ENCODE measurements at regions of chr17 and their contacts with region 1.

Region 1: GRCh38 chr17:75749545-75750389 is 15.2 kb downstream of the GALK1 start:
- DNase-seq: no peak
- H3K4me3 ChIP-seq: no peak overlapping the region
- H3K27me3 ChIP-seq: no peaks in the 10 kb centered on the region
- CTCF ChIP-seq: peak; percentile 92

Region 2: DNA sequence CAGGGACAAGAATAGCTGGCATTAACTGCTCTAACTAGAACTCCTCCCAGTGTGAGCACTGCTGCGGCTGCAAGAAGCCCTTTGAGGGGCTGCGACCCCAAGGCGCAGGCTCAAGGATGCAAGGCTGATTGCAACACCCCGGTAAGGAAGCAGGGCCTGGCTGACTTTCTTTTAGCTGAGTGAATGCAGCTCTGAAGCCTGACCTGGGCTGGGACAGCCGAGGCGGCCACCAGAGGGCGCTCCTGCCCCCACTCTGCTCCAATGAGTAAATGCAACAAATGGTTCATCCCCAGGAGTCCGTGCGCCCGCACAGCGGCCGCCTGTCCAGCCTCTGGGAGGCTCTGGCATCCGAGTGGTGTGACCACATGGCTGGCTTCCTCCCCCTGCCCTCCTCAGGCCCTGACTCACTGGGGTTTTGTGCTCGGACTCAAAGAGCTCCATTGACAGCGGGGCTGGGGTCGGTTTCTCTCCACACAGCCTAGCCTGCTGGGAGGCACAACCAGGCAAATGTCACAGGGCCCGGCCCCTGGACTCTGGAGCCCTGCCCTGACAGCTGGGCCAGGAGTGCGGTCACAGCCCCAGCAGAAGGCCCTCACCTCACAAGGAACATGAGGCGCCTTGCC is 116.8 kb before region 1 on chr17 and contains the start of gene SMIM5:
- CTCF ChIA-PET with region 1: interaction called, 502 read pairs
- POLR2A ChIA-PET with region 1: no interaction called
- DNase-seq: peak; percentile 45
- H3K4me3 ChIP-seq: no peak within 1 kb of the TSS
- H3K27me3 ChIP-seq: no peaks in the 10 kb centered on the region
- CTCF ChIP-seq: peak; percentile 96
- polyA plus RNA-seq, gene SMIM5: 0.10 TPM in 1 of 2 replicates, not detected in the other

Region 3: DNA sequence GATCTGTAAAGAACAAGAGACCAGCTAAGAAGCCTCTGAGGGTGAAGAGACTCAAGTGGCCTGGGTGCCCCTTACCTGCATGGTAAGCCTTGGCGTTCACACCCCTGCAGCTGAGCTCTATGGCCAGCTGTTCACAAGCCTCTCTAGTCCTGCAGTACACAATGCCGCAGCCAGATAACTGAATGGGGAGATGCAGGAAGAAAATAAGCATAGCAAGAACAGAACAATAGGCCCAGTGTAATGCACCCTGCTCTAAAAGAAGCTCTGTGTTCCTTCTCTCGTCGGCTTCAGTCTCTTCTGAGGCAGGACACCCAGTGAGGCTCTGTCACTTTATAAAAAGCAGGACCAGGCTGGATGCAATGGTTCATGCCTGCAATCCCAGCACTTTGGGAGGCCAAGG is 88.2 kb before region 1 on chr17:
- CTCF ChIA-PET with region 1: interaction called, 55 read pairs
- POLR2A ChIA-PET with region 1: no interaction called
- DNase-seq: no peak
- H3K4me3 ChIP-seq: no peak overlapping the region
- H3K27me3 ChIP-seq: no peaks in the 10 kb centered on the region
- CTCF ChIP-seq: no peak

Region 4: GRCh38 chr17:75693500-75694481 is 56.0 kb before region 1 on chr17:
- CTCF ChIA-PET with region 1: interaction called, 607 read pairs
- POLR2A ChIA-PET with region 1: no interaction called
- DNase-seq: peak; percentile 93
- H3K4me3 ChIP-seq: no peak overlapping the region
- H3K27me3 ChIP-seq: no peaks in the 10 kb centered on the region
- CTCF ChIP-seq: peak; percentile 47

Region 5: DNA sequence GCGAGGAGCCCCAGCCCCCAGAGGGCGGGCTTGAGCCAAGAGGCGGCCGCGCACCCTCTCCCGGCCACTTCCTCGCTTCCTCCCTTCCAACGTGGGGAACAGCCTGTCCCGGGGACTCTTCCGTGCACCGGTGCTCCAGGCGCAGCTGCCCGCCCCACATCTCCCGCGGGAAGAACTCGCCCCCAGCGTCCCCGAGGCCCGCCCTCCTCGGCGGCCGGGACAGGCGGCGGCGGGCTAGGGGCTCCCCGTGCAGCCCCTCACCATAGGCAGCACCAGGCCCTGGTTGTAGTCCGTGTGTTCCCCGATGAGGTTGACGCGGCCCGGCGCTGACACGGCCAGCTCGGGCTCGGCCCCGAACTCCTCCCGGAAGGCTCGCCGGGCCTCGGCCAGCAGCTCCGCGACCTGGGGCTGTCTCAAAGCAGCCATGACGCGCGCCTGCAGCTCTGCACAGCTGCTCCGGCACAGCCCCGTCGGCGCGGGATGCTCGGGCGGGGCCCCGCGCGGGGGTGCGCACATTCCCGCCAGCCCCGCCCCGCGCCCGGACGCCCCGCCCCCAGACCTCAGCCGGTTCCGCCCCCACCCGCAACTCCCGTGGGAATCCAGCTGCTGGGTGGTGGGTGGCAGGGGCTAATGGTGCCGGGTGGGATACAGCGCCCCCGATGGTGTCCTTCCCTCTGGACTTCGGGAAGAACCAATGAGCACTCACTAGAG is 15.1 kb after region 1 on chr17 and contains the start of gene GALK1:
- CTCF ChIA-PET with region 1: interaction called, 63 read pairs
- POLR2A ChIA-PET with region 1: interaction called, 3 read pairs
- DNase-seq: no peak
- H3K4me3 ChIP-seq: peak within 1 kb of the TSS; percentile 78
- H3K27me3 ChIP-seq: no peaks in the 10 kb centered on the region
- CTCF ChIP-seq: peak; percentile 71
- polyA plus RNA-seq, gene GALK1: 19.9 and 35.8 TPM in 2 replicates

Region 6: DNA sequence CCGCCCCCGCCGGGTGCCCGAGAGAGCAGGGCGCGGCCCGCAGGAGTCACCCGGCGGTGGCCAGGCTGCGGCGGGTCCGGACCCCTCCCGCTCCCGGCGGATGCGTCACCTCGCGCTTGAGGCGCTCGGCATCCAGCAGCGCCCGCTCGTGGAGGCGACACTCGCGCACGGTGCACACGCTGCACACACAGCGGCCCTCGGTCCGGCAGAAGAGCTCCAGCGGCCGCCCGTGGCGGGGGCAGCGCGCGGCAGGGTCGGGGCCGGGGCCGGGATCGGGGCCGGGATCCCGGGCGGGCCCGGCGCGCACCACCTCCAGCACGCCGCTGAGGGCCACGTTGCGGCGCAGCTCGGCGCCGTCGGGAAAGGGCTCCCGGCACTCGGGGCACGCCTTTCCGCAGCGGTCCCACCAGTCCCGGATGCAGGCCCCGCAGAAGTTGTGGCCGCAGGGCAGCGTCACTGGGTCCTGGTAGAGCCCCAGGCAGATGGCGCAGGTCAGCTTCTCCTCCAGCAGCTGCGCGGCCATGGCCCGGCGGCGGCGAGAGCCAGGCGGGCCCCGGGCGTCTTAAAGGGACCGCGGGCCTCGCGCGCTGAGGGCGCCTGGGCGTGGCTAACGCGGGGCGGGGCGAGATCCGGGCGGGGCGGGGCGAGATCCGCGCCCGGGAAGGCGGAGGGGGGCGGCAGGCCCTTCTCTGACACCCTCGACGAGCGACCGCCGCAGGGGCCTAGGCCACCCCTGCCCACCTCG is 146.8 kb after region 1 on chr17 and contains the start of gene TRIM65:
- CTCF ChIA-PET with region 1: interaction called, 14 read pairs
- POLR2A ChIA-PET with region 1: no interaction called
- DNase-seq: no peak
- H3K4me3 ChIP-seq: peak within 1 kb of the TSS; percentile 52
- H3K27me3 ChIP-seq: no peaks in the 10 kb centered on the region
- CTCF ChIP-seq: peak; percentile 40
- polyA plus RNA-seq, gene TRIM65: 5.5 and 8.6 TPM in 2 replicates